ENCODE measurements at regions of chr21 and their contacts with region 1.

Region 1: GRCh38 chr21:29656504-29657239 is 283.1 kb downstream of the GRIK1 start:
- DNase-seq: no peak
- ATAC-seq: no peak
- H3K4me3 ChIP-seq: no peak overlapping the region
- H3K27ac ChIP-seq: no peak overlapping the region
- H3K4me1 ChIP-seq: peaks cover 2% of the 10 kb centered on the region in 2 donors
- H3K27me3 ChIP-seq: no peaks in the 10 kb centered on the region

Region 2: DNA sequence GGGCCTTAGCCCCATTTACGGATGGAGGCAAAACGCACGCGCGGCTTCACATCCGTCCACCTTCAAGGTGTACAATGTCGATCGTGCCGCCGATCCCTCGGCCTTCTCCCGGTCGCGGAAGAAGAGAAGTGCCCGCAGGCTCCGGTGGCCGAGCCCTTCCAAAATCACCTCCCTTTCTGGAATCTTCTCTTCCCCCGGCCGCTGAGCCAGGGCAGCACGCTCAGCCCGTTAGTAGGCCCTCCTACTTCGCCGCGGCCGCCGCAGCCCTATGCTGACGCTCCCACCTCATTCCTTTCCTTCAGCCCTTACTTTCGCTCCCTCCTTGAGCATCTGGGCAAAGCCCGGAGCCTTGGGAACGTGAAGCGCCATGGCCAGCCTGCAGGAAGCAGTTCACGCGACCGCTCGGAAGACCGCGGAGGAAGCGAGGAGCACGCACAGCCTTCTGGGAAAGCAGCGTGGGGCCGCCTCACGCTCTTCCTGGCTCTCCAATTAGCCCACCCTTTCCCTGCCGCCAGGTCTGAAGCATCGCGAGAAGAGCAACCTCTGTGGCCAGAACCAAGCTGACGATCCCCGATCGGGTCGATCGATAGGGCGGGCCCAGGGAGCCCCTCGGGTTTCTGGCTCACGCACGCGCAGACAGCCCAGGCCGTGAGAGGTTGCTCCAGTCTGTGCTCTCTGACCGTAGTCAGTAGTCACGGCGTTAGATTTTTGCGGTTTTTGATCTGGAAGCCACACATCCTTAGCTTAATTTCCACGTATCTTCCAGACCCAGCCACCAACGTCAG is 583.3 kb before region 1 on chr21 and contains the start of gene CCT8:
- intact Hi-C with region 1: loop called in 1 of 2 experiments (anchors 5 kb)
- DNase-seq: peak; percentile 100
- ATAC-seq: peak; percentile 99
- H3K4me3 ChIP-seq: peak within 1 kb of the TSS; percentile 52 to 95
- H3K27ac ChIP-seq: peak within 1 kb of the TSS; percentile 34 to 43
- H3K4me1 ChIP-seq: peaks cover 0 to 4% of the 10 kb centered on the region in 2 donors
- H3K27me3 ChIP-seq: no peaks in the 10 kb centered on the region
- total RNA-seq, gene CCT8: 88.7 to 129 TPM